ENCODE measurements at regions of chr1 and their contacts with region 1.

Region 1: DNA sequence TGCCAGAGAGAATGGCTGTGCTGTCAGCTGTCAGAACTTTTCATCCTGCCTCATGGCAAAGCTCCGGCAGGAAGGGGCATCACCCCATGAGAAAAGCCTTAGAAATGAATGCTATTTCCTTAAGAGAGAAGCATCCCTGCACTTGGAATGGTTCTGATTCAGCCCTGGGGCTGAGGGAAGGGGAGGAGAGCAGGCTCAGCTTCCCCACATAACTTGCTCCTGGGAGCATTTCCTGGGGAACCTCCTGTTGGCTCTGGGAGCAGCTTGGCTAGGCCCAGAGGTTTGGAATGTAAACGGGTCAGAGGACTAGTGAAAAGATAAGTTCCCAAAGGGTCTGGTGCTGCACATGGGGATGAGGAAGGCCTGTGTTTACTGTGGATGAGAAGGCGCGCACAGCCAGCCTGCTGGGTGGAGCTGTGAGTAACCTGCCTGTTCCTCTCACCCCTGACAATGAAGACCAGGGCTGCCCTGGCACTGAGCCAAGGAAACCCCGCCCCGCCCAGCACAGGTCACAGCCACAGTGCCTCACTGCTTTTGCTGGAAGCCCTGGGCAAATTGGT is 5.0 kb downstream of the PRELP start:
- DNase-seq: peak; percentile 90
- H3K4me3 ChIP-seq: peak overlapping the region; percentile 58
- H3K27ac ChIP-seq: peak overlapping the region; percentile 79
- H3K4me1 ChIP-seq: peaks cover 37% of the 10 kb centered on the region
- H3K27me3 ChIP-seq: no peaks in the 10 kb centered on the region

Region 2: DNA sequence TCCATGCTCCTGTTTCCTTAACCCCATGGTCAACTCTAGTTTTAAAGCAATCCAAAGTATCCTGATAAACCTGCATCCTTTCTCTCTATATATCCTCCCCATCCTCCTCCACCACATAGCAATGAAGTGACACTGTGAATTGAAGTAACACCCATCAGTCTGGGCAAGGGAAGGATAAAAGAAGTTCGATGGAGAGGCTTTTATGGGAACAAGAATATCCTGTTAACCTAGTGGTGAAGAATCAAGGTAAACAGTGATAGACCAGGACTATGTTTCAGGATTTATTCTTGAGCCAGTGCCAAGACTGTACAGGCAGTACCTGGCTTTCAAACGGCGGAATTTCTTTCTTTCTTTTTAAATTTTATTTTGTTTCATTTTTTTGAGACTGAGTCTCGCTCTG is 609.2 kb before region 1 on chr1:
- in situ Hi-C with region 1: no loop called
- DNase-seq: no peak
- H3K4me3 ChIP-seq: no peak overlapping the region
- H3K27ac ChIP-seq: no peak overlapping the region
- H3K4me1 ChIP-seq: no peaks in the 10 kb centered on the region
- H3K27me3 ChIP-seq: no peaks in the 10 kb centered on the region

Region 3: GRCh38 chr1:203273206-203273868 is 207.3 kb before region 1 on chr1:
- in situ Hi-C with region 1: loop called (anchors 10 kb)
- DNase-seq: peak; percentile 89
- H3K4me3 ChIP-seq: no peak overlapping the region
- H3K27ac ChIP-seq: no peak overlapping the region
- H3K4me1 ChIP-seq: peaks cover 4% of the 10 kb centered on the region; the same call in 1 of the 2 replicates
- H3K27me3 ChIP-seq: no peaks in the 10 kb centered on the region

Region 4: DNA sequence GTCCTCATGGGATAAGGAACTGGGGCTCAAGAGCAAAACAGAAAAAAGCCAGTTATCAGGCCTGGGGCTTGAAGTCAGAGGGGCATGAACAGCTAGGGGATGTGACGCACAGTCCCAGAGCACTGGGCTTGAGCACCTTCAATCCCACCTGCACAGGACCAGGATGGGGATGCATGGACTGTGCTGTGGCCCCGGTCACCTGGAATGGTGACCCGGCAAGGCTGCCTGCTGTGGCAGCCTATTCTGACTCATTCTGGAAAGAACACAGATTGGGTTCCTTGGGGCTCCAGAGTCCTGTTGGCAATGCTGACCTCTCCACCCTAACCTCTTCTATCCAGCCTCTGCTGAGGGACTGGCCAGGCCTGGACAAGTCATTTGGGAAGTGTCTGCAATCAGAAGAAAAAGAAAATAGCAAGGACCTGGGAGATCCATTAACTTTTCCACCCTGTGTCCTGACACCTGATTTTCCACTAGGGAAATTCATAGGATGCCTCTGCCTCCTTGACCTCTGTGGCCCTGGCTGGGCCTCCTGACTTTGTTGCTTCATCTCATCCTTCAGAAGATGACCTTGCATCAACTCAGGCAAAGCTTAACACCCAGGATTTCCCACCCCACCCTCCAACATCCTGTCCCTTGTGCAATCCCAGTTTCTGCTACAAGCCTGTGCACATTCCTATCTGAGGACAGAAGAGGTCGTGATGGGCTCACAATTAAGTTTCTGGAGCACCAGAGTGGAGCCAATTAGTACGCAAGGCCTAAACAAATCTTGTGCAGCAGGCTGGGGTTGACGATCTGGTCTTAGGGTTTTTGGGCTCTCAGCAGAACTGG is 111.8 kb before region 1 on chr1:
- in situ Hi-C with region 1: loop called (anchors 10 kb)
- DNase-seq: peak; percentile 87
- H3K4me3 ChIP-seq: no peak overlapping the region
- H3K27ac ChIP-seq: no peak overlapping the region
- H3K4me1 ChIP-seq: peaks cover 12% of the 10 kb centered on the region
- H3K27me3 ChIP-seq: no peaks in the 10 kb centered on the region

Region 5: DNA sequence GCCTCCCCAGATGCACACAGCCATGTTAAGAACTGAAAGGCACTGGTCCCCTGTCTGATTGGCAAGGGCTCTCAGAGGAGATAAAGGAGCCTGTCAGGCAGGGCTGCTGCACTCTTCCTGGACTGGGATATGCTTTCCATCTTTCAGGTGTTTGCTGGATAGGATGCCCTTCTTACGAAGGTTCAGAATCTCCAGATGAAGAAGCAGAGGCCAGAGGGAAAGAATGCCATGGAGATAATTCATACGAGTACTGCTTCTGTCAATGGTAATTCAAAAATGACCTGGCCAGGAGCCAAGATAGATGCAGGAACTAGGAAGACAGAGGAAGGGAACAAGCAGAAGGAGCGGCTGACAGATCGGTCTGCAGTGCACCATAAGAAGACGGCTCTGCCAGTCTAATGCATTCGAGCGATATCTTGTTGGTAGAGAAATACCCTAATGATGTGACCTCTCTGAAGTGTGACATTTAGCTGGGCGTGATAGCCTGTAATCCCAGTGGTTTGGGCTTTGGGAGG is 129.4 kb after region 1 on chr1:
- in situ Hi-C with region 1: no loop called
- DNase-seq: no peak
- H3K4me3 ChIP-seq: no peak overlapping the region
- H3K27ac ChIP-seq: no peak overlapping the region
- H3K4me1 ChIP-seq: peaks cover 13% of the 10 kb centered on the region
- H3K27me3 ChIP-seq: no peaks in the 10 kb centered on the region

Region 6: DNA sequence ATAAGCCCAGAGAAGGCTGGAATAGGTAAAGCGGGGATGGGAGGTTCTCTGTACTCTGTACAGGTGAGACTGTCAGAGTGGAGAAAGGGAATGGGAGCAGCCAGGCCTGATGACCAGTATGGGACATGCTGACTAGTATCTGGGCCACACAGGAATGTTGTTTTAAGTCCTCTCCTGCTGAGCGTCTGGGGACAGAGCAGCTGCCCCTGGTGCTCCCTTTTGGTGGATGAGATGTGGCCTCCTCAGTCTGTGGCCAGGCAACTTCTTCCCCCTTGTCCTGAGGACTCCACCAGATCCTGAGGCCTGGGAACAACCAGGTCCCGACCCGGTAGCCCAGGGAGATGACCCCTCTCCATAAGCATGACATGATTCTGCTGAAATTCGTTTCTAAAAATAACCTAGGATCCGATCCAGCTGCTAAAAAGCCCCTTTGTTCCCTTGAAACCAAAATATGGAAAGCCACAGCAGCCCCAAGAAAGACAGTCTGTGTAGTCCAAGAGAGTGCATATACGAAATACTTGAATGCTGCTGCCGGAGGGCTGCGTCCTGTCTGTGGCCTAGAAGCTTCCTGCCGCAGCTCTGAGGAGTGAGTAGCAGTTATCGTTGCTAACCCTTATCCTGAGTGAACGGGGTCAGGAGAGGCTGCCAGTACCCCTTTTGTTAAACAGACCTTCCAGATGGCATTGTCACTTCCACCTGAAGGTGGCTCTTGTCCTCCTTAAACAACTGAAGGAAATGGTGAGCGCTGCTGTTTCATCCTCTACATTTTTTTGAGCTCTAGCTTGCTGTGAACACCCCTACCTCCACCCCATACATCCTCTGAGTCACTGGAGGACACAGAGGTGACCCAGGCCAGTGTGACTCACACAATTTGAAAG is 193.2 kb after region 1 on chr1:
- in situ Hi-C with region 1: no loop called
- DNase-seq: peak; percentile 98
- H3K4me3 ChIP-seq: no peak overlapping the region
- H3K27ac ChIP-seq: peak overlapping the region; percentile 77
- H3K4me1 ChIP-seq: peaks cover 59% of the 10 kb centered on the region
- H3K27me3 ChIP-seq: no peaks in the 10 kb centered on the region

Region 7: GRCh38 chr1:203906932-203907331 is 426.3 kb after region 1 on chr1:
- in situ Hi-C with region 1: no loop called
- DNase-seq: peak; percentile 94
- H3K4me3 ChIP-seq: peak overlapping the region; percentile 12; the same call in 1 of the 2 replicates
- H3K27ac ChIP-seq: peak overlapping the region; percentile 64
- H3K4me1 ChIP-seq: peaks cover 27% of the 10 kb centered on the region
- H3K27me3 ChIP-seq: no peaks in the 10 kb centered on the region